Activated B cell treated with CpG ODN at 0.5 μM for 24 hours (primary cell): ENCODE measurements at regions of chr7 and their contacts with region 1.

Region 1: DNA sequence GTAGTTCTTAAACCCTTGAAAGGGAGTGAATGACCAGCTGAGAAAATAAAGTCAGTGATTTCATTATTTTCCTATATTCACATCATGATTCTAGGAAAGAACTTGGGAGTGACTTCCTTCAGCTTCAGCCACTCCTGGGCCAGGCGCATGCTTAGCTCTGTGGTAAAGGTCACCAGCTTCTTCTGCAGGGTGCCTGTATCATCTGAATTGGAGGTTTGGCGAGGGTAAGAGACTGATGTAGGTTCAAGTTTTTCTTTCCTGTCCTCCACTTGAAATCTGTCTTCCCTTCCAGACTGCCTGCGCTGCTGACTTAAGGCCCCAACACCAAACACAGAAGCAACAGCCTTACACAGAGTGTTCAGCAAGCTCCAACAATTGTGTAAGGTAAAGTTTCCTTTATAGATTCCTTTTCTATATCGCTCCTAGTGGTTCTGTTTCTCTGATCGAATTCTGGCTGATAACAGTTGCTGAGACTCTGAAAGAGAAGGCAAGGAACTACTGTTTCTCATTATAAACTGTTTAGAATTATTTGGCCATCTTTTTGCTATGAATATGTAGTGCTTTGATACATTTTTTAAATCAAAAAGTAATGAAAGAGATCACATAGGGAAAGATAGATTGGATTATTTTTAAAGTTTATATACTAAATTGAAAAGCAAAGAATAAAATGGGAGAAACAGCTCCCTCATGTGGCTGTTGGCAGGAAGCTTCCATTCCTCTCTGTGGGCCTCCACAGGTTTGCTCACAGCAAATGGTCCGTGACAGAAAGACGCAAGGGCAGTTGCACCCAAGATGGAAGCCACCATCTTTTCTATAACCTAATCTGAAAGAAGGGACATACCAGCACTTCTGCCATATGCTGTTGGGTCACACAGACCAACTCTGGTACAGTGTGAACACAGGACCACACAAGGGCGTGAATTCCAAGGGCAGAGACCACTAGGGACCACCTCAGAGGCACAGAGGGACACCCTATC is 14.0 kb downstream of the GATAD1 start:
- DNase-seq: no peak
- ATAC-seq: peak; percentile 50
- H3K4me3 Mint-ChIP-seq: no peak overlapping the region
- H3K27ac Mint-ChIP-seq: no peak overlapping the region
- H3K4me1 Mint-ChIP-seq: no peaks in the 10 kb centered on the region
- H3K27me3 Mint-ChIP-seq: no peaks in the 10 kb centered on the region
- CTCF ChIP-seq: no peak

Region 2: DNA sequence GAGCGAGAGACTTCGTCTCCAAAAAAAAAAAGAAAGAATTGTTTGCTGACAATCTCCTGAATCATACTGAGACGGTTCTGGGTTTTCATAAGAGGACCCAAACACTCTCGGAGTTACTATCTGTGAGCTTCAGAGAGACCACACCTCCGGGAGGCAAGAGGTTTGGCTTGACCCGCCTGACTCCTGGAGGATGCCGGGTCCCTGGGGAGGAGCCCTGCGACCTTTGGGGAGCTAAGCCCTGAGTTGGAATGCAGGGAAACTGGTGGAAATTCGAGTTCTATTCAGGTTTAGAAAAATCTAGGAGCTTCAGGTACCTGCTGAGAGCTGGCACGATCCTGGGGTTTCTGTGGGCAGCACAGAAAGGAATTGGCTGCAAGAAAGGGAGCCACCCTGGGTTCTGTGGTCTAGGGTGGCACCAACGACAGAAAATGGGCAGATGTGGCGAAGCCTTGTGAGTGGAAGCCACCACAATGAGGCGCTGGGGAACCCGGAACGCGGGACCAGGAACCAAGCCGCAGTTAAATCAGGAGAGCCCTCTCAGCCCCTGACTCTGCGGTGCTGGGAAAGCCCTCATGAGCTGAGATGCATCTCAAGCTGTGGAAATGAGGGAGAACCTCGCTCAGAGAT is 35.9 kb before region 1 on chr7:
- CTCF ChIA-PET with region 1: no interaction called
- POLR2A ChIA-PET with region 1: no interaction called
- intact Hi-C with region 1: loop called (anchors 1 kb)
- DNase-seq: no peak
- ATAC-seq: no peak
- H3K4me3 Mint-ChIP-seq: no peak overlapping the region
- H3K27ac Mint-ChIP-seq: no peak overlapping the region
- H3K4me1 Mint-ChIP-seq: peaks cover 6% of the 10 kb centered on the region
- H3K27me3 Mint-ChIP-seq: peaks cover 11% of the 10 kb centered on the region
- CTCF ChIP-seq: no peak